ENCODE measurements at regions of chr7 and their contacts with region 1.

Region 1: DNA sequence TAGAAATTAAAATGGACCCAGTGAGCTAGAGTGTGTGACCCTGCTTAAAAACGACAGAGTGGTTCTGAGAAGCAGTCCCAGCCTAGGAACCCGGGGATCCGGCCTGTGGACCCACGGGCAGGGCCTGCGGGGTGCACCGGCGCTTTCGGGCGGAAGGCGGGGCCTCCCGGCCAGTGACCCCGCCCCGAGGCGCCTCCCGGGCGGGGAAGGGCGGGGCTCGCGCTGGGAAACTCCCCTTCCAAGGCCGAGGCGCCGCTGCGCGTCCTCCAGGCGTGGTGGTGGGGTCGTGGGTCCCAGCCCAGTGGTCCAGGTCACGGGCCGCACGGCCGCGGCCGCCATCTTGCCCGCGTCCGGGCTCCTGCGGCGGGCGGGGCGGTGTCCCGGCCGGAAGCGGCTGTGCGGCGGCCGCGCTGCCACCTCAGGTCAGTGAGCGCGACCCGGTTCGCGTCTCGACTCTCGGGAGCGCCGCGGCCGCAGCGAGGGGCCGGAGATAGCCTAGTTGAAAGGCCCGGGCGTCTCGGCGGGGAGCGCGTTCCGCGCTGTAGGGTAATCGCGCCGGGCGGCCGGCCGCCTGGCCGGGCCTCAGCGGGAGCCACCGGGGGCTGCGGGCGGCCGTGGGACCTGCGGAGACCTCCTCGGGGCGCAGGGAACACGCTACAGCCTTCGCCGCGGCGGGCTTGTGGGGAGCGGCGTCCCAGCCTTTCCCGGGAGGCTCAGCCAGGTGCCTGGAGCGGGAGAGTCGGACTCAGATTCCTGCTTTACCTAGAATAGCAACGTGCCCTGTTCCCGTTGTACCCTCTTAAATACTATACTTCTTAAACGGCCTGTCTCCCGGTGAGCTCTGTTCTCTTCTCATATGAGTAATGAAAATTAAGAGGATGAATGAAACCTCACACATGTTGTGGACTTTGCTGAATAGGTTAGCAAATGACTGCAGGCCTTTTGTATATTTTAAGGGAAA is at the start of gene MIOS:
- DNase-seq: peak; percentile 69
- ATAC-seq: peak; percentile 93
- H3K4me3 ChIP-seq: peak within 1 kb of the TSS; percentile 67 to 83 (median 79)
- H3K27ac ChIP-seq: peak within 1 kb of the TSS; percentile 73
- H3K4me1 ChIP-seq: peaks cover 42% of the 10 kb centered on the region
- H3K27me3 ChIP-seq: no peaks in the 10 kb centered on the region
- CTCF ChIP-seq: no peak
- EP300 ChIP-seq: no peak
- POLR2A ChIP-seq: peak; percentile 70 to 76
- RAD21 ChIP-seq: peak; percentile 49; the same call in 1 of the 2 replicates
- total RNA-seq, gene MIOS: 33.5 and 36.2 TPM in 2 replicates

Region 2: DNA sequence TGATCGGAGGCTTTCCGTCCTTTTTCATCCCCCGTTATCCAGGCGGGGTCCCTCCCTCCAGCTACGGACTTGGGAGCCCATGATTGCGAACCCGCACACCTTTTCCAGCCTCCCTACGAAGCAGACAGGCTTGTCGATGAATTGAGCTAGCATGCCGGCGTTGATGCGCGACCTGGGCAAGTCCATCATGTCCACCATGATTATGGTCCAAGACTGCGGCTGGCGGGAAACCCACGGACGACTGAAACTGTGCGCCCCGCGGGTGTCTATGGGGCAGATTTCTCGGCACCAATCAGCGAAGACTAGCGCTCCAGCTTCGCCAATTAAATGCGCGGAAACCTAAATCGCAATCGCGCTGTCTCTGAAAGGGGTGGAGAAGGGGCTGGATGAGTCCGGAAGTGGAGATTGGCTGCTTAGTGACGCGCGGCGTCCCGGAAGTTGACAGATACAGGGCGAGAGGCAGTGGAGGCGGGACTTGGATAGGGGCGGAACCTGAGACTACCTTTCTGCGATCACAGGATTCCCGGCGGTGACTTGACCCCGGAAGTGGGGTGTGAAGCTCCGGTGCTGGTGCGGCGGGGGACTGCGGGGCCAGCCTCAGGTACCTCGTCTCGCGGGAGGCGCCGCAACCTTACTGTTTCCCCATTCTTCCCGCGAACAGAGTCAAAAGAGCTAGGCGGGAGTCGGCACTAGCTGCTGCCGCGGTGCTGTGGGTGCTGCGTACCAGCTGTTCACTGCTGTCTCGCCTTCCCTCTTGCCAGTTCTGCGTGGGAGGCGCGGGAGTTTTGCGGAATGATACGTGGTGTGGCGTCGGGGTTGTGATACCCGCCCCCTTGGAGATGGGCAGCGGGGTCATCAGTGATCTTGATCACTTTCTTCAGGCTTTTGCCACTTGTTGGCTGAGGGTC is 73.5 kb after region 1 on chr7 and contains the start of gene UMAD1:
- CTCF ChIA-PET with region 1: no interaction called
- POLR2A ChIA-PET with region 1: interaction called, 4 read pairs
- in situ Hi-C with region 1: no loop called
- intact Hi-C with region 1: loop called (anchors 1 kb)
- DNase-seq: peak; percentile 99
- ATAC-seq: peak; percentile 98
- H3K4me3 ChIP-seq: peak within 1 kb of the TSS; percentile 88 to 95 (median 94)
- H3K27ac ChIP-seq: peak within 1 kb of the TSS; percentile 82
- H3K4me1 ChIP-seq: peaks cover 35% of the 10 kb centered on the region
- H3K27me3 ChIP-seq: no peaks in the 10 kb centered on the region; a peak in 1 of 5 replicates
- CTCF ChIP-seq: peak; percentile 24
- EP300 ChIP-seq: 0 out of 4 replicates have a peak, but pooled peaks of 1 of the 2 experiments have one; percentile 7
- POLR2A ChIP-seq: peak; percentile 71 to 76
- RAD21 ChIP-seq: no peak
- total RNA-seq, gene UMAD1: 17.6 and 26.4 TPM in 2 replicates